Caco-2 (cell line): ENCODE measurements at regions of chr6 and their contacts with region 1.

Region 1: GRCh38 chr6:3797231-3798054 is 45.9 kb upstream of the PXDC1 start:
- DNase-seq: peak in 1 of 2 experiments; percentile 52
- H3K4me3 ChIP-seq: no peak overlapping the region
- H3K4me3 Mint-ChIP-seq: peak overlapping the region; percentile 40
- H3K27ac Mint-ChIP-seq: peak overlapping the region; percentile 94
- H3K4me1 ChIP-seq: peaks cover 44% of the 10 kb centered on the region
- H3K4me1 Mint-ChIP-seq: peaks cover 40% of the 10 kb centered on the region
- H3K27me3 ChIP-seq: no peaks in the 10 kb centered on the region
- H3K27me3 Mint-ChIP-seq: no peaks in the 10 kb centered on the region
- CTCF ChIP-seq: no peak

Region 2: GRCh38 chr6:3751730-3752542 is 45.5 kb before region 1 on chr6:
- CTCF ChIA-PET with region 1: no interaction called
- POLR2A ChIA-PET with region 1: no interaction called
- intact Hi-C with region 1: loop called (anchors 2 kb)
- DNase-seq: peak; percentile 93 to 95
- H3K4me3 ChIP-seq: peak overlapping the region; percentile 95
- H3K4me3 Mint-ChIP-seq: peak overlapping the region; percentile 62
- H3K27ac Mint-ChIP-seq: peak overlapping the region; percentile 85
- H3K4me1 ChIP-seq: peaks cover 13% of the 10 kb centered on the region
- H3K4me1 Mint-ChIP-seq: peaks cover 14% of the 10 kb centered on the region
- H3K27me3 ChIP-seq: no peaks in the 10 kb centered on the region
- H3K27me3 Mint-ChIP-seq: no peaks in the 10 kb centered on the region
- CTCF ChIP-seq: peak; percentile 51 to 61

Region 3: GRCh38 chr6:3764516-3765335 is 32.7 kb before region 1 on chr6:
- CTCF ChIA-PET with region 1: no interaction called
- POLR2A ChIA-PET with region 1: no interaction called
- intact Hi-C with region 1: no loop called
- DNase-seq: no peak
- H3K4me3 ChIP-seq: no peak overlapping the region
- H3K4me3 Mint-ChIP-seq: no peak overlapping the region
- H3K27ac Mint-ChIP-seq: no peak overlapping the region
- H3K4me1 ChIP-seq: no peaks in the 10 kb centered on the region
- H3K4me1 Mint-ChIP-seq: no peaks in the 10 kb centered on the region
- H3K27me3 ChIP-seq: no peaks in the 10 kb centered on the region
- H3K27me3 Mint-ChIP-seq: no peaks in the 10 kb centered on the region
- CTCF ChIP-seq: no peak

Region 4: GRCh38 chr6:3905945-3906845 is 108.8 kb after region 1 on chr6:
- CTCF ChIA-PET with region 1: no interaction called
- POLR2A ChIA-PET with region 1: no interaction called
- intact Hi-C with region 1: loop called (anchors 1 kb)
- DNase-seq: peak; percentile 42 to 65
- H3K4me3 ChIP-seq: no peak overlapping the region
- H3K4me3 Mint-ChIP-seq: no peak overlapping the region
- H3K27ac Mint-ChIP-seq: peak overlapping the region; percentile 82
- H3K4me1 ChIP-seq: peaks cover 41% of the 10 kb centered on the region
- H3K4me1 Mint-ChIP-seq: peaks cover 17% of the 10 kb centered on the region
- H3K27me3 ChIP-seq: no peaks in the 10 kb centered on the region
- H3K27me3 Mint-ChIP-seq: no peaks in the 10 kb centered on the region
- CTCF ChIP-seq: no peak